Activated CD4-positive, alpha-beta T cell treated with anti-CD3 and anti-CD28 coated beads, Interleukin-2, amount 10 ng/mL, durations not matched to agents 7 days and 5 days (primary cell): ENCODE measurements at regions of chr3 and their contacts with region 1.

Region 1: DNA sequence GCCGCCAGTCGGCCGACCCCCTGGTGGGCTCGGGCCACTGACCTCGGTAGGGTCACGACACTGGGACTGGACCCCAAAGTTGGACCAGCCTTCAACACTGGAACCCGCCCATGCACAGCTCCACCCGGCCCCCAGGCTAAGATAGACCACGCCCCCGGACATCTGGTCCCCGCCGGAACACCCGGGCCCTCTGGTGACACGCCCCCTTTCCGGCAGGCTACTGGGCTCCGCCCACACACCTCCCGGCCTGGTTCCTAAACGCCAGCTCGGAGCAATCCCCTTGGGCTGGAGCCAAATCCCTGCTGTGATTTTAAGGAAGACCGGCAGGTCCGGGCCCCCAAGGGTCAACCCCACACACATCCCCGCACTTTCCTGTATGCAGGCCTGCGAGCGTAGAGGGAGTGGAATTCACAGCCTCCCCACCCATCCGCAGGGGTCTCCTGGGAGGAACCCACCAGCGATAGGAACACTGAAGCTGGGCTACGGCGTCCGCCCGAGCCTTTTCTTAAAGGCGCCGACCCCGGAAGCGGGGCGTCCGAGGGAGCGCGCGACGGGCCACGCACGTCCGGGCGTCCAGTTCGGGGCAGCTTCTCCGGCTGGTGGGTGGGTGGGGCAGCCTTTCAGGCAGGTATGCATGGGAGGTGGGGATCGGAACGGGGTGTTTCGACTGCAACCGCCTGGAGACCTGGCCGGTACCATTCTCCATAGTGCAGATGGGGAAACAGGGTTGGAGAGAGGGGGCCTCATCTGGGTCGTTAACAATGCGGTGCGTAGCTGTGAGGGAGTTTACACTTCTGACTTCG is at the start of gene HEMK1:
- DNase-seq: peak; percentile 96
- H3K4me3 Mint-ChIP-seq: peak within 1 kb of the TSS; percentile 95
- H3K27ac Mint-ChIP-seq: peak within 1 kb of the TSS; percentile 94
- H3K4me1 Mint-ChIP-seq: peaks cover 72% of the 10 kb centered on the region
- H3K27me3 Mint-ChIP-seq: no peaks in the 10 kb centered on the region
- total RNA-seq, gene HEMK1: 42.3 to 49.0 TPM

Region 2: DNA sequence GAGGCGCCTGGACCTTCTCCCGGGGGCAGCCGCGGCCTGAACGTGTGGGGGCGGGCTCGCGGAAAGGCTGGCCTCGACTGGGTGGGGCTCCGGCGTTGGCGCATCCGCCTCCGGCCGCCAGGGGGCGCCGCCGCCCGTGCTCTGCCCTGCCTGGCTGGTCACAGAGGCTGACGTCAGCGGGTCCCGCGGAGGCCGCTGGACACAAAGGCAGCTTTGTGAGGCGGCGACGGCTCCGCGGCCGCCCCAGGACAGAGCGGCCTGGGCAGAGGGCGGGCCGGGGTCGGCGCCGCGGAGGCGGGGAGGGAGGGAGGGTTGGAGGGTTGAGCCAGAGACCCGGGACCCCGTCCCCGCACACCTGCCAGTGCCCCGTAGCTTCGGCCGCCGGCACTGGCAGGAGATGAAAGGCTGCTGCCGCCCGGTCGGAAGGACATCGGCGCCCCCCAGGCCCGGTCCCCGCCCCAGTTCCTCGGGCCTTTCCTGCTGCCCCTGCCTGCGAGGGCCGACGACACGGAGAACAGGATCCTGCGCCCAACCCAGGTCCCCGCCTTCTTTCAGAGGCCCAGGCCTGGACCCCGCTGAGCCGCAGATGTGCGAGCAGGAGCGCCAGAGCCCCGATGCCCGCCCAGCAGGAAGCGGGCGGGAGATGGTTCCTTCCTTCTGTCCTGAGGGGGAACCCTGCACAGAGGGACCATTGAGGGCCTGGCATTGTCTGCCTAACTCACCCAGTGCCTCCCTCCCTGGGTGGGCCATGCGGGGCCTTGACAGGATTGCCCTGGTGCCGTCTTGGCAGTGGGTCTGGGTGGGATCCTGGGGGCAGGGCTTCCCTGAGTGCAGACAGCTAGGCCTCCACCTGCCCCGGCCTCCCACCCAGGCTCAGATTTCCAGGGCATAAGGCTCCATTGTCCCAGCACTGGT is 308.9 kb before region 1 on chr3:
- CTCF ChIA-PET with region 1: no interaction called
- POLR2A ChIA-PET with region 1: no interaction called
- DNase-seq: peak; percentile 82
- H3K4me3 Mint-ChIP-seq: peak overlapping the region; percentile 51
- H3K27ac Mint-ChIP-seq: peak overlapping the region; percentile 46
- H3K4me1 Mint-ChIP-seq: peaks cover 7% of the 10 kb centered on the region
- H3K27me3 Mint-ChIP-seq: no peaks in the 10 kb centered on the region

Region 3: DNA sequence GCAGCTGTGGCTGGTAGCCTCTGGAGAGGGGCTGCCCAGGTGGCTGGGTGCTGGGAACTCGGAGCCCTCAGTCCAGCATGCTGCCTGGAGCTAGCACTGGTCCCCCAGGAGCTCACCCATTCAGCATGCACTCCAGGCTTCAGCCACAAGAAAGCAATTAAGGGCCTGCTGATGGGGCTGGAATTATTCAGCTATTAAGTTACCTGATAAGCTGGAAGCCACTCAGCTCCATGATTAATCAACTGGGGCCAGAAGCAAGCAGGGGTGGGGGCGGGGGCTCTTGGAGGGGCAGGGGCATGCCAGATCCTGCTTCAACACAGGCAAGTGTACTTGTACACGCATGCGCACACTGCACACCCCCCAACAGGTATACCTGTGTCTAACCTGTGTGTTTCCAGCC is 187.8 kb before region 1 on chr3:
- CTCF ChIA-PET with region 1: no interaction called
- POLR2A ChIA-PET with region 1: no interaction called
- DNase-seq: no peak
- H3K4me3 Mint-ChIP-seq: no peak overlapping the region
- H3K27ac Mint-ChIP-seq: no peak overlapping the region
- H3K4me1 Mint-ChIP-seq: no peaks in the 10 kb centered on the region
- H3K27me3 Mint-ChIP-seq: peaks cover 2% of the 10 kb centered on the region

Region 4: GRCh38 chr3:50550079-50550741 is 18.9 kb before region 1 on chr3:
- CTCF ChIA-PET with region 1: interaction called, 10 read pairs
- POLR2A ChIA-PET with region 1: no interaction called
- DNase-seq: peak; percentile 75
- H3K4me3 Mint-ChIP-seq: no peak overlapping the region
- H3K27ac Mint-ChIP-seq: no peak overlapping the region
- H3K4me1 Mint-ChIP-seq: peaks cover 9% of the 10 kb centered on the region
- H3K27me3 Mint-ChIP-seq: no peaks in the 10 kb centered on the region

Region 5: GRCh38 chr3:50580683-50581458 is 11.7 kb after region 1 on chr3:
- CTCF ChIA-PET with region 1: interaction called, 284 read pairs
- POLR2A ChIA-PET with region 1: interaction called, 4 read pairs
- DNase-seq: no peak
- H3K4me3 Mint-ChIP-seq: no peak overlapping the region
- H3K27ac Mint-ChIP-seq: peak overlapping the region; percentile 88
- H3K4me1 Mint-ChIP-seq: peaks cover 84% of the 10 kb centered on the region
- H3K27me3 Mint-ChIP-seq: no peaks in the 10 kb centered on the region

Region 6: GRCh38 chr3:50587806-50588758 is 18.9 kb after region 1 on chr3:
- CTCF ChIA-PET with region 1: interaction called, 284 read pairs
- POLR2A ChIA-PET with region 1: interaction called, 34 read pairs
- DNase-seq: peak; percentile 71
- H3K4me3 Mint-ChIP-seq: peak overlapping the region; percentile 45
- H3K27ac Mint-ChIP-seq: peak overlapping the region; percentile 96
- H3K4me1 Mint-ChIP-seq: peaks cover 89% of the 10 kb centered on the region
- H3K27me3 Mint-ChIP-seq: no peaks in the 10 kb centered on the region

Region 7: DNA sequence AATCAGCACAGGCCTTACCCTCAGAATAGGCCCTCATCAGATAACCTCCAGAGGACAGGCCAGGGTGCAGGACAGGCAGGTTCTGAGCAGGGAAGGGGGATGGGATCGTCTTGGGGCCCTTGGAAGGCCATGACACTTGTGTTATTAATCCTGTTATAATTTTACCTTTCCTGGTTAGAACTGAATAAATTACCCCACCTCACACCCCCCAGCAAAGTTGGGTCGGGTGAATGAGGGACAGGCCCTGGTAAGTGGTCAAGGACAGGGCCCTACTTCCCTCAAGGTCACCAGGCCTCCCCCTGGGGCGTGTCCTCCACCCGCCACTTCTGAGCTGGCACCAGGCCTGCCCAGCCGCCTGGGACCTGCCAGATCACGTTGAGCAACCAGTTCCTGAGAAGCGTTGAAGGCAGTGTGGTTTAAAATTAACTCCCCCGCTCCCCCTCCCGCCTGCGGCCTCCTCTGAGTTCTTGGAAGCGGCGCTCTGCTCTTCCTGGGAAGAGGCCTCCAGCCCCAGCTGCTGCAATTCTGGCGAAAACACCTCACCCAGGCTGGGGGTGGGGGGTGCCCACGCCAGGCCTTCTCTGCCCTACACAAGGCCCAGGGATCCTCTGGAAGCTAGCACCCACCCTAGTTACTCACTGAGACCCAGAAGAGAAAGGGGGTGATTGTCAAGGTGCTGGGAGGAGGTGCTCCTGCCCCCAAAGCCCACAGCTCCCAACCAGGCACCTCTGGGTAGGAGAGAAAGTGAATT is 31.9 kb after region 1 on chr3:
- CTCF ChIA-PET with region 1: interaction called, 209 read pairs
- POLR2A ChIA-PET with region 1: interaction called, 85 read pairs
- DNase-seq: peak; percentile 84
- H3K4me3 Mint-ChIP-seq: peak overlapping the region; percentile 99
- H3K27ac Mint-ChIP-seq: peak overlapping the region; percentile 98
- H3K4me1 Mint-ChIP-seq: peaks cover 85% of the 10 kb centered on the region
- H3K27me3 Mint-ChIP-seq: no peaks in the 10 kb centered on the region

Region 8: DNA sequence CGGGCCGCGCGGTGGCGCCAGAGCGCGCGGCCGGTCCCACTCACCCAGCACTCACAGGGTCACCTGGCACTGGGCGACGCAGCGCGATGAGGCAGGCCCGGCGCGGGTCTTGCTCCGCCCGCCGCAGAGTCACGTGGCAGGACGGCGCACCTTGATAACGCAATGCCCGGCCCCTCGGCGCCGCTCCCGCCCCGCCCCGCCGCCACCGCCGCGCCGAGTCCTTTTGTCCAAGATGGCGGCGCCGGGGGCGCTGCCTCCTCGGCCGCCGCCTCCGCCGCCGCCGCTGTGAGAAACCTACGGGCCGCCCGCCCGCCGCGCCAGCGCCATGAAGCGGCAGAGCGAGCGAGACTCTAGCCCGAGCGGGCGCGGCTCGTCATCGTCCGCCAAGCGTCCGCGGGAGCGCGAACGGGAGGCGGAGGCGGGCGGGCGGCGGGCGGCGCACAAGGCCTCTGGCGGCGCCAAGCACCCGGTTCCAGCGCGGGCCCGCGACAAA is 822.0 kb after region 1 on chr3 and contains the start of gene RBM15B:
- CTCF ChIA-PET with region 1: interaction called, 18 read pairs
- POLR2A ChIA-PET with region 1: no interaction called
- DNase-seq: peak; percentile 97
- H3K4me3 Mint-ChIP-seq: peak within 1 kb of the TSS; percentile 83
- H3K27ac Mint-ChIP-seq: peak within 1 kb of the TSS; percentile 93
- H3K4me1 Mint-ChIP-seq: peaks cover 78% of the 10 kb centered on the region
- H3K27me3 Mint-ChIP-seq: no peaks in the 10 kb centered on the region
- total RNA-seq, gene RBM15B: 29.0 to 29.8 TPM